Prostate gland (tissue), 2 donors: ENCODE measurements at regions of chr15 and their contacts with region 1.

Region 1: DNA sequence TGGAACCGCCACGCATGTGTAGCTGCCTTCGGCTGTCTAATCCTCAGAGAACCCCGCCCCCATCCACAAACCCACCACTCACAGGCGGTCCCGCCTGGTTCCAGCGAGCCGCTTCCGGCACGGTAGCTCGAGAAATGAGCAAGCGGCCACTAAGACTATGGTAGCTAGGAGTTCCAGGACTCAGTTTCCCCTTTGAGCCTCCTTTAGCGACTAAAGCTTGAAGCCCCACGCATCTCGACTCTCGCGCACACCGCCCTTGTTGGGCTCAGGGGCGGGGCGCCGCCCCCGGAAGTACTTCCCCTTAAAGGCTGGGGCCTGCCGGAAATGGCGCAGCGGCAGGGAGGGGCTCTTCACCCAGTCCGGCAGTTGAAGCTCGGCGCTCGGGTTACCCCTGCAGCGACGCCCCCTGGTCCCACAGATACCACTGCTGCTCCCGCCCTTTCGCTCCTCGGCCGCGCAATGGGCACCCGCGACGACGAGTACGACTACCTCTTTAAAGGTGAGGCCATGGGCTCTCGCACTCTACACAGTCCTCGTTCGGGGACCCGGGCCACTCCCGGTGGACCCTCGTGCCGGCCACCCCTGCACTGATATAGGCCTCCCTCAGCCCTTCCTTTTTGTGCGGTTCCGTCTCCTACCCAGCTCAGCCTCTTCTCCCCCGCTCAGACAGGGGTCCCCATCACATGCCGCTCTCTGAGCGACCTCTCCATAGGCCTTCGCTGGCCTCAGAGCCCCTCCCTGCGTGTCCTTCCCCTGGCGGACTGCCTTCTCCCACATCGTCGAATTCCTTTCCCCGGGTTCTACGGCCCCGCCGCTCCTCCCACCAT is at the start of gene RAB11A:
- DNase-seq: peak; percentile 94
- H3K4me3 ChIP-seq: peak within 1 kb of the TSS; percentile 84 to 95
- H3K27ac ChIP-seq: peak within 1 kb of the TSS; percentile 96 to 98
- H3K4me1 ChIP-seq: no peaks in the 10 kb centered on the region
- H3K27me3 ChIP-seq: no peaks in the 10 kb centered on the region
- CTCF ChIP-seq: peak in 3 of 4 experiments; percentile 37 to 44 (median 42)
- POLR2A ChIP-seq: peak; percentile 95
- total RNA-seq, gene RAB11A: 178 to 223 TPM

Region 2: GRCh38 chr15:65792130-65792987 is 77.0 kb before region 1 on chr15 and contains the start of gene DENND4A:
- intact Hi-C with region 1: loop called (anchors 5 kb)
- DNase-seq: peak; percentile 97
- H3K4me3 ChIP-seq: peak within 1 kb of the TSS; percentile 95
- H3K27ac ChIP-seq: peak within 1 kb of the TSS; percentile 98
- H3K4me1 ChIP-seq: no peaks in the 10 kb centered on the region
- H3K27me3 ChIP-seq: no peaks in the 10 kb centered on the region
- CTCF ChIP-seq: peak in 2 of 4 experiments; percentile 16 to 18
- POLR2A ChIP-seq: peak; percentile 92
- total RNA-seq, gene DENND4A: 24.5 to 49.6 TPM